ENCODE measurements at regions of chr1 and their contacts with region 1.

Region 1: DNA sequence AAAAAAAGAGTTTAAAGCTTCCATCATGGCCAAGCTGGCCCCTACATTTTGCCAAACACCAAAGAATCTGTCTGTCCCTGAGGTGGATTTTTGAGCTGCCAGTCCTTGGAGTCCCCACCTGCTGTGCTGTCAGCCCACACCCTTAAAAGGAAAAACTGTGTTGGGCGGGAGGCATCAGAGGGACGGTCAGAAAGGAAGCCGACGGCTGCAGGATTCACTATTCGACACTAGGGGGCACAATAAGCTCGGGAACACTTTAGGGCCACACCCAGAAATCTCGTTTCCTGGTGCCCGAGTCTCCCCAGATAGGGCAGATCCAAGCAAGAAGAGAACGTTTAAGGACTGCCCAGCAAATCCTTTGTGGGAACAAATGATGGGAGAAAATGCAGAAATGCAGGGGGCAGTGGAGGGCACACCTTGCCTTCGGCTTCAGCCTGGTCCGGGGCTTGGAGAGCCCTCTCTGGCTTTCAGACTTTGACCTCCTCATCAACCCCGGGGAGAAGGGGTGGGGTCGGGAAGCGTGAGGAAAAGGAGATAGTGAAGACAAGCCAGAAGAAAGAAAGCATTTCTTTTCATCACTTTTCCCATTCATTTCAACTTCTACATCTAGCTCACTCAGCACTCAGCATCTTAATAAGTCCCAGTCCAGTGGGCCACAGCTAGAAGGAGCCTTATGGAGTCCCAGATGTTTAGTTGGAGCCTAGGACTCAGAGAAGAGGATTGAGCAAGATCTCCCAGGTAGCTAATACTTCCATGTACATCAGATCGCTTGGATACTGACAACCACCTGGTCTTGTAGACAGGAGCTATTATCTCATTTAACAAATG is 5.0 kb upstream of the CTTNBP2NL start:
- DNase-seq: peak; percentile 91
- ATAC-seq: peak; percentile 88
- H3K4me3 Mint-ChIP-seq: peak overlapping the region; percentile 80
- H3K27ac Mint-ChIP-seq: no peak overlapping the region; the same call in 1 of the 2 replicates
- H3K4me1 Mint-ChIP-seq: peaks cover 38% of the 10 kb centered on the region
- H3K27me3 Mint-ChIP-seq: no peaks in the 10 kb centered on the region
- CTCF ChIP-seq: peak; percentile 87

Region 2: GRCh38 chr1:112247036-112247597 is 143.9 kb before region 1 on chr1:
- CTCF ChIA-PET with region 1: no interaction called
- POLR2A ChIA-PET with region 1: no interaction called
- DNase-seq: no peak
- ATAC-seq: no peak
- H3K4me3 Mint-ChIP-seq: no peak overlapping the region
- H3K27ac Mint-ChIP-seq: no peak overlapping the region
- H3K4me1 Mint-ChIP-seq: no peaks in the 10 kb centered on the region
- H3K27me3 Mint-ChIP-seq: no peaks in the 10 kb centered on the region
- CTCF ChIP-seq: no peak

Region 3: DNA sequence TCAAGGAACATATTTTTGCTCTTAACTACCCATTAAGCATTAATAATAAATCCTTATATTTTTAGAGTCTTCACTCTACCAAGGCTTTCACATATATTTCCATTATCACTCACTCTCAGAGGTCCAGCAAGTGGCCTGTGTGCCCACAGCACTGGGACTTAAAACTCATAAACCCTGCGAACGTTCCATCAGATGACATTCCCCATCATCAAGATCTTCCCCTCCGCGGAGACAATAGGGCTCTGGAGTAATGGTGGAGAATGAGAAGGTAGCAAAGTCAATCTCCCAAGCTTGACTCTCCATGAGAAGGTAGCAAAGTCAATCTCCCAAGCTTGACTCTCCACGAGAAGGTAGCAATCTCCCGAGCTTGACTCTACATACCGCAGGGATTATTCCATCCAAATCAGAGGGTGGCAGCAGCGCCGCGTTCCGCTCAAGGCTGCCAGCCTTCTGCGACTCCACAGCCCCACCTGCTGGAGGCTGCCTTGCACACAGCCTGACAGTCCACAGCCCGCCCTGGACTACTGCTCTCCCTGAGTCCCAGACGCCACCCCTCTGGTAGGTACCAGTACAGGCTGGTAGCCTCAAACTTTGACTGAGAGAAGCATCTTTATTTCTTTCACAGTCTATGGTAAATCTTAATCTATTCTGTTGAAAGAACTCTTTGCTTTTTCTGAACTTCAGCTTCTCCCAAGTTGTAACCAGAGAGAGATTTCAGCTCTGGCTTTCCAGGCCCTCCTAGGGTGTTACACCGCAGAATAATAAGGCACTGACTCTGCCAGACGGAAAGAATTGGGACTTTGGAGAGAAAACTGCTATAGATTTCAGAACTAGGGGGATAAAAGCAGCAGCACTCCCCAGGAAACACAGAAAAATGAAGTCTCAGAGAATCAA is 21.4 kb before region 1 on chr1:
- CTCF ChIA-PET with region 1: interaction called, 12 read pairs
- POLR2A ChIA-PET with region 1: no interaction called
- DNase-seq: peak; percentile 95
- ATAC-seq: peak; percentile 100
- H3K4me3 Mint-ChIP-seq: no peak overlapping the region
- H3K27ac Mint-ChIP-seq: no peak overlapping the region
- H3K4me1 Mint-ChIP-seq: 0 out of 2 replicates have a peak, but pooled peaks cover 2% of the 10 kb centered on the region
- H3K27me3 Mint-ChIP-seq: peaks cover 10% of the 10 kb centered on the region
- CTCF ChIP-seq: peak; percentile 92

Region 4: DNA sequence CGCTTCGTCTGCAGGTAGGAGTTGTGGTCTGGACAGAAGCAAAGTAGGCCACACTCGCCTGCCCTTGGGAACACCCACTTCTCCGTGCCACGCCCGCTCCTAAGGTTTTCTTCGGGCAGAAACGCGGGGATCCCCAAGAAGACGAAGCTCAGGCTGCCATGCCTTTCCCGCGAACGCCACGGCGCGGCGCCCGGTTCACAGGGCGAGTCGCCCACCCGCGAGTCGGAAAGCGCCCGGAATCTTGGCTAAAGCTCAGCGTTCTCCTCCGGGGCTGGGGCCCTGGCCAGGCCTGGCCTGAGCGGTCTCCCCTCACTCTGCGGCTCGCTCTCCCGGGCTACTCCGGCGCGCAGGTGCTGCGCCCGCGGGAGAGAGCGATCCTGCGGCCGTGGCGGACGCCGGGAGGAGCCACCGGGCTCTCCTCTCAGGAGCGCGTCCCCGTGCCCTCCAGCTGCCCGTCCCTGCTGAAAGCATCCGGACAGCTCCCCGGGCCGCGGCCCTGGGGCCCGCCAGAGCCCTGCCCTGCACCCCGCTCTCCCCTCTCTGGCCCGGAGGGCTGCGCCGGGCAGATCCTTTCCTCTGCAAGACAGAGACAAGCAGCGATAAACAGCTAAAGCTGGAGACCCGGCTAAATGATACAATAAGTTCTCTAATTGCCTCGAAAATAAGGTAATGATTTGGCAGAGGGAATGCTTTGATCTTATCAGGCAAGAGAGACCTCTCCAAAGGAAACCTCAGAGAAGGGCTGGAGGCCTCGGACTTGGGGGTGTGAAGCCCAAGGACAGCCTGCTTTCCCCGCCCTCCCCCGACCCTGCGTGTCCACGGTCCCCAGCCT is 111.0 kb after region 1 on chr1:
- CTCF ChIA-PET with region 1: interaction called, 19 read pairs
- POLR2A ChIA-PET with region 1: no interaction called
- DNase-seq: peak; percentile 63
- ATAC-seq: peak; percentile 79
- H3K4me3 Mint-ChIP-seq: peak overlapping the region; percentile 70
- H3K27ac Mint-ChIP-seq: no peak overlapping the region
- H3K4me1 Mint-ChIP-seq: peaks cover 15% of the 10 kb centered on the region
- H3K27me3 Mint-ChIP-seq: peaks cover 88% of the 10 kb centered on the region
- CTCF ChIP-seq: no peak

Region 5: DNA sequence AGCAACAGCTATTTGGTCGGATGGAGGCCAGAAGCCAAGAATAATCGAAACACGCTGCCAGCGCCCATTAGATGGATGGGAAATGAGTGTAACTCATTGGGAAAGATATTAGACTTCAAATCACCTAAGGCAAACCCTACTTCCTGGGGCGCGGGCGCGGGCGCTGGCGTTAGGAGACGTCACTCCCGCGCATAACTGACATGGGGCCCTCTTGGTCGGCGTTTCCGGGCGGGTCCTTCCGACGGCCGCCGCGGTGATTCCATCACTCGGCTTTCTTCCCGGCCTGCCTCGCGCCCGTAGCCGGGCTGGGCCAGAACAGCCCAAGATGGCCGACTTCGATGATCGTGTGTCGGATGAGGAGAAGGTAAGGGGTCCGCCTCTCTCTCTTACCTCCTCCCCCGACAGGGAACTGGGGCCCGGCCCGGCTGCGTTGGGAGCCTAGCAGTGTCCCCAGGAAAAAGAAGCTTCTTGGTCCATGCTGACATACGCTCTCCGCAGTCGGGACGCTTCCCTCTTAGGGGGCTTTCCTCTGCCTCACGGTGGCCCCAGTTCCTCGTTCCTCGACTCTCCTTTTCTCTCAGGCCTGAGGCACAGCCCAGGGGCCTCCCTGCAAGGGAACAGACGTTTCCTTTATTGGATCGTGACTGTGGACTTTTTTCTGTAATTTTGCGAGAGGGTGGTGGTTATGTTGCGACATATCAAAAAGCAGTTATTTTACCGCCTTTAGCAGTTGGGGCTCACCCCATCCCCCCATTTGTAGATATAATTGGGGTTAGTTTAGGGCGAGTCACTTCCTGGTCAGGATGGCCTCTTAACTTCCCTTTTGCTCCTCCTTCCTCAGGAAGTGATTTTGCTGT is 228.8 kb after region 1 on chr1 and contains the start of gene CAPZA1:
- CTCF ChIA-PET with region 1: interaction called, 10 read pairs
- POLR2A ChIA-PET with region 1: no interaction called
- DNase-seq: peak; percentile 87
- ATAC-seq: peak; percentile 92
- H3K4me3 Mint-ChIP-seq: peak within 1 kb of the TSS; percentile 99
- H3K27ac Mint-ChIP-seq: peak within 1 kb of the TSS; percentile 99
- H3K4me1 Mint-ChIP-seq: peaks cover 21% of the 10 kb centered on the region
- H3K27me3 Mint-ChIP-seq: no peaks in the 10 kb centered on the region
- CTCF ChIP-seq: no peak
- total RNA-seq, gene CAPZA1: 86.6 to 97.5 TPM (median 91.3 TPM) in 3 replicates

Region 6: GRCh38 chr1:112674439-112674985 is 283.5 kb after region 1 on chr1 and contains the start of gene MOV10:
- CTCF ChIA-PET with region 1: interaction called, 16 read pairs
- POLR2A ChIA-PET with region 1: interaction called, 6 read pairs
- DNase-seq: peak; percentile 72
- ATAC-seq: peak; percentile 85
- H3K4me3 Mint-ChIP-seq: peak within 1 kb of the TSS; percentile 89
- H3K27ac Mint-ChIP-seq: peak within 1 kb of the TSS; percentile 92
- H3K4me1 Mint-ChIP-seq: peaks cover 68% of the 10 kb centered on the region
- H3K27me3 Mint-ChIP-seq: peaks cover 10% of the 10 kb centered on the region; the same call in 1 of the 2 replicates
- CTCF ChIP-seq: no peak
- total RNA-seq, gene MOV10: 80.7 to 99.1 TPM (median 98.8 TPM) in 3 replicates

Region 7: DNA sequence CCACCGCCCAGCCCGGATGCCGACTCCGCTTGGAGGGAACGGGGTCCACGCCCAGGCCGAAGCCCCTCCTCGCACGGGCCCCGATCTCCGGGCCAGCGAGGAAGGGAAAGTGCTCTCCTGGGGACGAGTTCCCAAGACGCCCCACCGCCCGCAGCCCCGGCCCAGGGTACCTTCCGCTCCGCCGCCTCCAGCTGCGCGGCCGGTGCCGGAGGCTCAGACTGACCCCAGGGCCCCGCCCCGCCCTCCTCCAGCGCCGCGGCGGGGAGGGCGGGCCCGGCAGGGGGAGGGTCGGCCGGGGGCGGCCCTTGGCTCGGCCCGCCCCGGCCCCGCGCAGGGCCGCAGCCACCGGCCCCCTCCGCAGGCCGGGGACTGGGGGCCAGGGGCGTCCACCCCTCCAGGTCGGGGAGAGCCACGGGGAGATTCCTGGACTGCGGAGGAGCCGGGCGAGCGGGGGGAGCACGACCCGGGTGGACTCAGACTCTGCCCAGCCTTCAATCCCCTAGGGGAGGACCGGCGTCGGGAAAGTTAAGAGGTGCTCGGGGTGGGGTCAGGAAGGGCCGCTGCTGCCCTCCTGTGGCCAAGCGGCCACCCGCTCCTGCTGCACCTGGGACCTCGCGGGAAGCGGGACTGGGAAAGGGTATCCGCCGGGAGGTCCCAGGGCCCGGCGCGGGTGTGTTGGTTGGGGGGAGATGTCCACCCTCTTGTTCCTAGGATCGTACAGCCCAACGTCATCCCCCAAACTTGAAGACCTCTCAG is 316.1 kb after region 1 on chr1 and contains the start of gene RHOC:
- CTCF ChIA-PET with region 1: interaction called, 15 read pairs
- POLR2A ChIA-PET with region 1: interaction called, 6 read pairs
- DNase-seq: peak; percentile 90
- ATAC-seq: peak; percentile 59
- H3K4me3 Mint-ChIP-seq: peak within 1 kb of the TSS; percentile 73
- H3K27ac Mint-ChIP-seq: no peak within 1 kb of the TSS
- H3K4me1 Mint-ChIP-seq: peaks cover 63% of the 10 kb centered on the region
- H3K27me3 Mint-ChIP-seq: peaks cover 19% of the 10 kb centered on the region
- CTCF ChIP-seq: peak; percentile 79
- total RNA-seq, gene RHOC: 67.9 to 68.9 TPM (median 68.2 TPM) in 3 replicates

Measured in WTC11 (cell line).